ENCODE measurements at regions of chr20 and their contacts with region 1.

Region 1: GRCh38 chr20:56400090-56400542 is 7.7 kb downstream of the CSTF1 start:
- DNase-seq: peak; percentile 76
- ATAC-seq: peak; percentile 89
- H3K4me3 ChIP-seq: no peak overlapping the region
- H3K27ac ChIP-seq: no peak overlapping the region
- H3K4me1 ChIP-seq: no peaks in the 10 kb centered on the region
- H3K27me3 ChIP-seq: no peaks in the 10 kb centered on the region
- CTCF ChIP-seq: peak; percentile 87
- EP300 ChIP-seq: no peak
- POLR2A ChIP-seq: no peak
- RAD21 ChIP-seq: peak; percentile 52; the same call in 1 of the 2 replicates

Region 2: DNA sequence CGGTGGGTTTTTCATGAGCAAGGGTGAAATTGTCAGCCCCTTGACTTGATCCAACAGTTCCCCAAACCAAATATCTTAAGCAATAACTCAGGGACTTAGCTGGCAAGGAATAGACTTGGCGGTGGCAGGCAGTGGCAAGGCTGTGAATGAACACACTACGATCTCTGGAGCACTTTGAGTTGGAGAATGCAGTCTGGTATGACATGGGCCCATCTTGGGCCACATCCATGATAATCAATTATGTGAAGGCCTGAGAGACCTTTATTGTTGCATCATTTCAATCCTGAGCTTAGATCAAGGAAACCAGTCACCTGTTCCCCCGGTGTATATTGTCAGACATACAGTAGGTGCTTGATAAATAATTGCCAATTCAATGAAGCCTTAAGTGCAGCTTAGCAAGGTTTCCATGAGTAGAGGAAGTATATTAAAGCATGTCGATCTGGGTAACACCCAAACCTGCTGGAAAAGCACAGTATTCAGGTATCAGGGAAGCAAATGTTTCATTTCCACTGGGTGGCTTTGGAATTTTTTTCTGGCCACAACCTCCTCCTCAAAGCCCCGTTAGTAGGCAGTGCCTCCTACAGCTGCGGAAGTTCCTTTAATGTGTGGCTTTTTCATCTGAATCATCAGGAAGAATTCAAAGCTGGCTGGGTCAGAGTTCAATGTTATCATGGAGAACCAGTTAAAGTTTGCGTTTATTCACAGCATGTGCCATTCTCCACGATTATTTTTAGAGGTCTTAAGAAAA is 22.1 kb after region 1 on chr20:
- CTCF ChIA-PET with region 1: interaction called, 5 read pairs
- POLR2A ChIA-PET with region 1: interaction called, 5 read pairs
- in situ Hi-C with region 1: no loop called
- intact Hi-C with region 1: loop called (anchors 1 kb)
- DNase-seq: peak; percentile 81
- ATAC-seq: peak; percentile 74
- H3K4me3 ChIP-seq: peak overlapping the region; percentile 3 to 8 (median 6); a peak in 2 of 6 replicates
- H3K27ac ChIP-seq: no peak overlapping the region
- H3K4me1 ChIP-seq: peaks cover 66% of the 10 kb centered on the region
- H3K27me3 ChIP-seq: no peaks in the 10 kb centered on the region
- CTCF ChIP-seq: peak; percentile 27
- EP300 ChIP-seq: no peak
- POLR2A ChIP-seq: no peak
- RAD21 ChIP-seq: no peak

Region 3: DNA sequence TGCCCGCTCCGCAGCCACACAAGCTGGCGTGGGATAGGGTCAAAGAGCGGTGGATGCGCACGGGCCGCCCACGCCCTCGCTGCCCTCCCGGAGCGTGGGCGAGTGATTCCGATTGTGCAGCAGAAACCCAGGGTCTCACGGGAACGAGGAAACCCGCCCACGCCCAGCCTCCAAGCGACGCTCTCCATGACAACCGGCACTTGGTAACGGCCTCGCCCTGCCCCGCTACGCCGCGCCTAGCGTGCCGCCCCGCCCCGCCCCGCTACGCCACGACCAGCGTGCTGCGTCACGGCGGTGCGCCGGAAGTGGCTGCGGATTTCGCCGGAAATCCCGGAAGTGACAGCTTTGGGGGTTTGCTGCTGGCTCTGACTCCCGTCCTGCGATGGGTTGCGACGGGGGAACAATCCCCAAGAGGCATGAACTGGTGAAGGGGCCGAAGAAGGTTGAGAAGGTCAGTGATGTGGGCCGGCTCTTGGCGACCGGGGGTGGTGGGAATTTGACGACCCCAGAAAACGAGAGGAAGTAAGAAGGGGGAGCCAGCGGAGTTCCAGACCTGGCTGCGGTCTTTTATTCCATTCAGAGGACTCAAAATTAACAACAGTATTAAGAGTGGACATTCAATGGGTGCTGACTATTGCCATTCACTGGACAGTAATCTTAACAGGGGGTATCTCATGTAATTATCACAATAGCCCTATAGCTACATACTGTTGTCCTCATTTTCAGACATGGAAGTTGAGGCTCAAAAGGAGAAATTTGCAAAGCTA is 68.4 kb after region 1 on chr20 and contains the start of gene RTF2:
- CTCF ChIA-PET with region 1: no interaction called
- POLR2A ChIA-PET with region 1: no interaction called
- in situ Hi-C with region 1: loop called (anchors 5 kb)
- intact Hi-C with region 1: loop called (anchors 1 kb)
- DNase-seq: peak; percentile 89
- ATAC-seq: peak; percentile 99
- H3K4me3 ChIP-seq: peak within 1 kb of the TSS; percentile 90 to 97 (median 96)
- H3K27ac ChIP-seq: peak within 1 kb of the TSS; percentile 53
- H3K4me1 ChIP-seq: peaks cover 29% of the 10 kb centered on the region
- H3K27me3 ChIP-seq: no peaks in the 10 kb centered on the region; a peak in 2 of 5 replicates
- CTCF ChIP-seq: peak; percentile 26; the same call in 1 of the 2 replicates
- EP300 ChIP-seq: no peak
- POLR2A ChIP-seq: peak; percentile 88 to 89
- RAD21 ChIP-seq: peak; percentile 35; the same call in 1 of the 2 replicates
- total RNA-seq, gene RTF2: 142 and 202 TPM in 2 replicates

Region 4: GRCh38 chr20:56504373-56505005 is 104.4 kb after region 1 on chr20:
- CTCF ChIA-PET with region 1: interaction called, 10 read pairs
- POLR2A ChIA-PET with region 1: no interaction called
- in situ Hi-C with region 1: no loop called
- intact Hi-C with region 1: loop called (anchors 1 kb)
- DNase-seq: no peak
- ATAC-seq: peak; percentile 95
- H3K4me3 ChIP-seq: no peak overlapping the region
- H3K27ac ChIP-seq: no peak overlapping the region
- H3K4me1 ChIP-seq: no peaks in the 10 kb centered on the region
- H3K27me3 ChIP-seq: no peaks in the 10 kb centered on the region
- CTCF ChIP-seq: peak; percentile 40; the same call in 1 of the 2 replicates
- EP300 ChIP-seq: no peak
- POLR2A ChIP-seq: no peak
- RAD21 ChIP-seq: no peak

Region 5: DNA sequence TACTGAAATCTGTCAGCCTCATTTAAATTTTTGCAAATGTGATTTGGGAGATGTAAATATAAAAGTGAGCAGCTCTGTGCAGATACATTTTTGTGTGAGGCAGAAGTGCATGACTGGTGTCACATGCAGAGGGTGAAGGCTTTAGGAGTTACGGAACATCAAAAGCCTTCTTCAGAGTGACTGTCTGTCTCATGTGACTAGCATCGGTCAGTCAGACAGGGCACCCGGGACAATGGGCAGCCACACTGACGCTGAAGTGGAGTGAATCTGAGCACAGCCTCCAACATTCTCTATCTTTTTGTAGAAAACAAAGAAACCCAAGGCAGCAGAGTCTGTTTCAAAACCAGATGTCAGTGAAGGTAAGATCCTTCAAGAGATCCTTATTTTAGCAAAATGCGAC is 116.5 kb after region 1 on chr20:
- CTCF ChIA-PET with region 1: interaction called, 18 read pairs
- POLR2A ChIA-PET with region 1: no interaction called
- in situ Hi-C with region 1: no loop called
- intact Hi-C with region 1: loop called (anchors 1 kb)
- DNase-seq: no peak
- ATAC-seq: no peak
- H3K4me3 ChIP-seq: no peak overlapping the region
- H3K27ac ChIP-seq: no peak overlapping the region
- H3K4me1 ChIP-seq: no peaks in the 10 kb centered on the region
- H3K27me3 ChIP-seq: no peaks in the 10 kb centered on the region
- CTCF ChIP-seq: no peak
- EP300 ChIP-seq: no peak
- POLR2A ChIP-seq: no peak
- RAD21 ChIP-seq: no peak

Region 6: DNA sequence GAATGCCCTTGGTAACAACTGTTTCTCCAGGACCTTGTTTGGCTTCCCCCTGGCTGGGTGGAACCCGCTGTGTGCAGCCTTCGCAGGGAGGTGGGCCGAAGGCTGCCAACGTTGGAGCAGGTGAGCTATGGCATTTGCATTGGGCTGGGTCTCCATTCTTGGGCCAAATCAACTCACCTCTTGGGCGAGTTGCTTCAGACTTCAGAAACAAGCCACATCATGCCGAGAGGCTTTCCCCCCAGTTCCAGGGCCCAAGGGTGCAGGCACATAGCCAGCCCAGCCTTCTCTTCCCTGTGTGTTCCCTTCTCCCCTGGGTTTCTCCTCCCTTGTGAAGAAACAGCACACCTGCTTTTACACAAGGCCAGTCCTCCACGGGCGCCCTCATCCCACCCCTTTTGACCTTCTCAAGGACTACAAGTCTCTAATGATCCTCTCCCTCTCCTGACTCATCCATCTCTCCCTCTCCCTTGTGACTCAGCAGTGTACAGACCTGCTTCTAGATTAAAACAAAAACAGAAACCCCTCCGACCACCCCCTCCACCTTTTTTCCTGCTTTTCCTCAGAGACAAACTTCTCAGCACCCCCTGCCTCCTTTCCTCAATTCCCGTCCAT is 174.5 kb after region 1 on chr20:
- CTCF ChIA-PET with region 1: interaction called, 5 read pairs
- POLR2A ChIA-PET with region 1: no interaction called
- in situ Hi-C with region 1: no loop called
- intact Hi-C with region 1: loop called (anchors 1 kb)
- DNase-seq: no peak
- ATAC-seq: peak; percentile 7; the same call in 2 of the 3 replicates
- H3K4me3 ChIP-seq: no peak overlapping the region
- H3K27ac ChIP-seq: no peak overlapping the region
- H3K4me1 ChIP-seq: no peaks in the 10 kb centered on the region
- H3K27me3 ChIP-seq: peaks cover 0 to 28% of the 10 kb centered on the region in 2 experiments; a peak in 3 of 5 replicates
- CTCF ChIP-seq: no peak
- EP300 ChIP-seq: no peak
- POLR2A ChIP-seq: no peak
- RAD21 ChIP-seq: no peak